ENCODE measurements at regions of chr12 and their contacts with region 1.

Region 1: GRCh38 chr12:129821964-129822363 is 81.9 kb downstream of the TMEM132D start:
- DNase-seq: no peak
- H3K4me3 ChIP-seq: no peak overlapping the region
- H3K27ac ChIP-seq: no peak overlapping the region
- H3K4me1 ChIP-seq: no peaks in the 10 kb centered on the region
- H3K27me3 ChIP-seq: no peaks in the 10 kb centered on the region
- CTCF ChIP-seq: no peak

Region 2: GRCh38 chr12:129776977-129777667 is 44.8 kb before region 1 on chr12:
- CTCF ChIA-PET with region 1: no interaction called
- dilution Hi-C with region 1: loop called (anchors 5 kb)
- in situ Hi-C with region 1: no loop called
- intact Hi-C with region 1: no loop called
- DNase-seq: no peak
- H3K4me3 ChIP-seq: no peak overlapping the region
- H3K27ac ChIP-seq: no peak overlapping the region
- H3K4me1 ChIP-seq: no peaks in the 10 kb centered on the region
- H3K27me3 ChIP-seq: no peaks in the 10 kb centered on the region
- CTCF ChIP-seq: no peak

Measured in mammary epithelial cell (primary cell).